GM12878 (cell line): ENCODE measurements at regions of chr20 and their contacts with region 1.

Region 1: GRCh38 chr20:31630187-31630790 is 7.4 kb upstream of the COX4I2 start:
- DNase-seq: no peak
- ATAC-seq: peak; percentile 64
- H3K4me3 ChIP-seq: no peak overlapping the region
- H3K27ac ChIP-seq: no peak overlapping the region
- H3K4me1 ChIP-seq: no peaks in the 10 kb centered on the region
- H3K27me3 ChIP-seq: no peaks in the 10 kb centered on the region
- CTCF ChIP-seq: no peak
- EP300 ChIP-seq: no peak
- POLR2A ChIP-seq: no peak
- RAD21 ChIP-seq: no peak

Region 2: DNA sequence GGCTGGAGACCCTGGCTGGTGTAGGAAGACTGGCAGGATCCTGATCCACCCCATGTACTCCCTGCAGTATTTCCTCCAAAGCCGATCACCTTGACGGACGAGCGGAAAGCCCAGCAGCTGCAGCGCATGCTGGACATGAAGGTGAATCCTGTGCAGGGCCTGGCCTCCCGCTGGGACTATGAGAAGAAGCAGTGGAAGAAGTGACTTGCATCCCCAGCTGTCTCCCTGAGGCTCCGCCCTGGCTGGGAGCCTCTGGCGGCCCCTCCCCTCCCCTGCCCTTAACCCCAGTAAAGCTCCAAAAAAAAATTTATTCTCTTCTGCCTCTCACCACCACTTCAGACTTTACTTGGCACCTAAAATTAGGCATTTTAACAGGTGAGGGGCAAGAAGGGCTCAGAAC is 14.4 kb after region 1 on chr20:
- CTCF ChIA-PET with region 1: interaction called, 14 read pairs
- POLR2A ChIA-PET with region 1: interaction called, 4 read pairs
- RAD21 ChIA-PET with region 1: interaction called, 3 read pairs
- SMC1A ChIA-PET with region 1: interaction called, 3 read pairs
- in situ Hi-C with region 1: no loop called
- intact Hi-C with region 1: no loop called
- DNase-seq: no peak
- ATAC-seq: no peak
- H3K4me3 ChIP-seq: no peak overlapping the region
- H3K27ac ChIP-seq: no peak overlapping the region
- H3K4me1 ChIP-seq: peaks cover 2% of the 10 kb centered on the region
- H3K27me3 ChIP-seq: no peaks in the 10 kb centered on the region
- CTCF ChIP-seq: no peak
- EP300 ChIP-seq: no peak
- POLR2A ChIP-seq: no peak
- RAD21 ChIP-seq: no peak

Region 3: DNA sequence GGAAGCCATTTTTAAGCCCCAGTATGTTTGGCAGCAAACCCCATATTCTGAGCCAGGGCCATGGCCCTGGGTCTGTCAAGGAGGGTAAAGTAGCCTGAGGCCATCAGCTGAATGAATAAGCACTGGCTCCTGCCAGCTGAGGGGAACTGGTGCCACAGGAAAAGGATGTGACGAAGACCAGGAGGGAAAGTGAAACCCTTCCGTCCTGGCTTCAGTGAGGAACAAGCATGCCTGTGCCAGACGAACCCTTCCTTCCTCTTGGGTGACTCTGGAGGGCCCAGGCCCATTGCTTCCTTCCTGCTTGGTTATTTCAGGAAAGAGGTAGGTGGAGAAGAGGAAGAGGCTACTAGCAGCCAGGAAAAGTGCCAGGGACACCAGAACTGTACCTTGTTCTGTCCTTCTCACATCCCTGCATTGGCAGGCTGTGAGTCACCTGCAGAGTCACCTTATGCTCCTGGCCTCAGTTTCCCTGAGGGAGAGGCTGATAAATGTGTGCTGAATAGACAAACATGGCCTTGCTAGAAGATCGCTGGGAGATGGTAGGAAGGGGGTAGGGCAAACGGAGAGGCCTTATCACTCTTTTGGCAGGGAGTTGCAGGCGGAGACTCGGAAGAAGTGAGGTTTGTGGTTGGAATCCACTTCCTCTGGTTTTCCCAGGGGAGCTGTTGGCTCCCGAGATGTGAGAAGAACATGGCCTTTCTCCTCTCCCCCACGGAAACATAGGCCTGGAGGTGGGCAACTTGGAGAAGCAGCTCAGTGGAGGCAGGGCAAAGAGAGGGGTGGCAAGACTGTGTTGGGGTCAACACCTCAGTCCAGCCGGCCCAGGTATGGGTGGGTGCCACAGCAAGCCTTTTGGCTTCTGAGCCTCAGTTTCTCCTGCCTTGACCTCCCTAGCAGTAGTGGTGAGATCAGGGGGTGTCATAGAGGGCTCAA is 44.9 kb after region 1 on chr20:
- CTCF ChIA-PET with region 1: interaction called, 10 read pairs
- POLR2A ChIA-PET with region 1: interaction called, 5 read pairs
- RAD21 ChIA-PET with region 1: interaction called, 3 read pairs
- SMC1A ChIA-PET with region 1: no interaction called
- in situ Hi-C with region 1: no loop called
- intact Hi-C with region 1: no loop called
- DNase-seq: no peak
- ATAC-seq: peak; percentile 89
- H3K4me3 ChIP-seq: peak overlapping the region; percentile 68
- H3K27ac ChIP-seq: peak overlapping the region; percentile 91
- H3K4me1 ChIP-seq: peaks cover 30% of the 10 kb centered on the region
- H3K27me3 ChIP-seq: no peaks in the 10 kb centered on the region
- CTCF ChIP-seq: no peak
- EP300 ChIP-seq: no peak
- POLR2A ChIP-seq: peak; percentile 63
- RAD21 ChIP-seq: no peak

Region 4: GRCh38 chr20:31705598-31706597 is 75.6 kb after region 1 on chr20:
- CTCF ChIA-PET with region 1: no interaction called
- POLR2A ChIA-PET with region 1: no interaction called
- RAD21 ChIA-PET with region 1: no interaction called
- SMC1A ChIA-PET with region 1: no interaction called
- in situ Hi-C with region 1: no loop called
- intact Hi-C with region 1: no loop called
- DNase-seq: no peak
- ATAC-seq: peak; percentile 88
- H3K4me3 ChIP-seq: no peak overlapping the region
- H3K27ac ChIP-seq: peak overlapping the region; percentile 53
- H3K4me1 ChIP-seq: peaks cover 34% of the 10 kb centered on the region
- H3K27me3 ChIP-seq: no peaks in the 10 kb centered on the region
- CTCF ChIP-seq: no peak
- EP300 ChIP-seq: peak in 1 of 2 experiments; percentile 45; a peak in 1 of 4 replicates
- POLR2A ChIP-seq: no peak
- RAD21 ChIP-seq: no peak